Heart right ventricle (tissue), 16 donors: ENCODE measurements at regions of chr9 and their contacts with region 1.

Region 1: DNA sequence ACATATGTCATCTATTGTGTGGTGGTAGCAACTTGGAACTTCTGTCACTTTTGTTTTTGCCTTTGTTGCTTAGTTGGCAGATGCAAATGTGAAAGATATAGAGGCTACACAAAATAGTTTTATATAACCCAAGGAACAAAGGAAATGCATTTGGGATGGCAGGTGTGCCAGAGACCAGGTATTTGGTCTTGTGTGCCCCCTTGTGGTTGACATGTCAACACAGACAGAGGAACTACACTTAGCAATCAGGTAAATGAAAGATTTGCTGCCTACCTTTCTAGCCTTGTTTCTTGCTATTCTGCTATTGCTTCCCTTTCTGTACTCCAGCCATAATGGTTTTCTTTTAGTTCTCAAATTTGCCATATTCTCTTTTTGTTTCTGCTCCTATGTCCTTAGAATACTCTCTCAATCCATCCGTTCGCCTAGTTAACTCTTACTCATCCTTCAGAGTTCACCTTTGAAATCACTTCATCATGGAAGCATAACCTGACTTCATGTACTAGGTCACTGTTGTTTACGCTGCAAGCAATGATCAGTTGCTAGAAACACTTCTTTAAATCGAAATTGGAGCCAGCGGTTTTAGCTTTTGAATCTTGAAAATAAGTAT is 119.5 kb downstream of the TRPM3 start:
- DNase-seq: peak in 1 of 2 donors; percentile 10
- ATAC-seq: no peak
- H3K4me3 ChIP-seq: no peak overlapping the region
- H3K27ac ChIP-seq: no peak overlapping the region
- H3K4me1 ChIP-seq: no peaks in the 10 kb centered on the region
- H3K27me3 ChIP-seq: no peaks in the 10 kb centered on the region
- CTCF ChIP-seq: peak in 8 of 9 donors; percentile 24 to 58 (median 42)

Region 2: DNA sequence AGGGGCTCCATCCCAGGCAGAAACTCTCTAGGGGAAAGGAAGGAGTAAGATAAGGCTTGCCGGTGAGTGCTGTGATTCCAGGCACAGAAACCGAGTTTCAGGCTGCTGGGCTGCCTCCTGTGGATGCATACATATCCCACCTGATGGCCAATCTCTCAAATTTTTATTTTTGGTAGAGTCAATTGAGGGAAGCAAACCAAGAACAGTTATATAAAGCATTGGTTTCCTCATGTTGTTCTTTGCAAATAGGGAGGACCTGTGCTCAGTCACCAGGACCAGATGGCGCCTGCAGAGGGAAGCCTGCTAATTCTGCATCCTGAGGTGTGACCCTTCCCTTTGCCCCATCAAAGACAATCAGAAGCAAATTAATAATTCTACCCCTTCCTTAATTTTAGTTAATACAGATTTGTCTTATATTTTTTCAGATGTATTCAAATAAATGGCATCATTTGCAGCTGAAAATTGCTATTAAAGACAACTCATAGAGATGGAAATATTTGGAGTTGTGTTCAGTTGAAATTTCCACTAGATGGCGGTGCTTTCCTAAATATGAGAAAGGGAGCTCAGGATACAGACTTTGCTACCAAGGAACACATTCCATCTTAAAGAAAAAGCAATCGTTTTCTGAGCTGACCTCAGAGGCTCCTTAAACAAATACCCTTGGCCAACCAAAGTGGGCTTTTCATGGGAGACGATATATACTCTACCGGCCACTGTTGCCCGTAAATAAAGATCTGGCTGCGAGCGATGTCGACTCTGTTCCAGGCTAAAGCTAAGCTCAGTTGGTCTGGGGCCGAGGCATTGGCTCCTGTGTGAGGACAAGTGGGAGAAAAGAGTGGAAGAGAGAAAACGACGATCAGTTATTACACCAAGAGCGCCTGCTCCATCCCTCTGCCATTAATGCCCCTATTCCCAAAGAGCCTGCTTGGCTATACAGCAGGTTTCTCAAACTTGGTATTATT is 361.7 kb before region 1 on chr9:
- intact Hi-C with region 1: loop called in 6 of 10 experiments (anchors 1 to 10 kb)
- DNase-seq: no peak
- ATAC-seq: peak in 6 of 8 donors; percentile 55 to 75 (median 62)
- H3K4me3 ChIP-seq: no peak overlapping the region
- H3K27ac ChIP-seq: no peak overlapping the region
- H3K4me1 ChIP-seq: no peaks in the 10 kb centered on the region
- H3K27me3 ChIP-seq: no peaks in the 10 kb centered on the region
- CTCF ChIP-seq: peak; percentile 32 to 78 (median 68)

Region 3: DNA sequence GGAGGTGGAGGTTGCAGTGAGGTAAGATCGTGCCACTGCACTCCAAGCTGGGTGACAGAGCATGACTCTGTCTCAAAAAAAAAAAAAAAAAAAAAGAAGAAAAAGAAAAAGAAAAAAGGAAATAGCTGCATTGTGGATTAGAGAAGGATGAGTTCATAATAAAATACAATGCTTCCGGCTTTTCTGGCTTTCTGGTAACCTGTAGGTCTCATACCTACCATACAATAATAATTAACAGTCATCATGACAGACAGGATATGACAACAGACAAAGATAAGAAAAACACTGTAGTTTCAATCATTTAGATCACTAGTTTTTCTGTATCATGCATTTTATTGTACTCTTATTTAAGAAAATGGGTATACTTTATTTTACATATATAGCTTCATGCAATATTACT is 160.2 kb after region 1 on chr9:
- intact Hi-C with region 1: no loop called
- DNase-seq: no peak
- ATAC-seq: no peak
- H3K4me3 ChIP-seq: no peak overlapping the region
- H3K27ac ChIP-seq: no peak overlapping the region
- H3K4me1 ChIP-seq: no peaks in the 10 kb centered on the region
- H3K27me3 ChIP-seq: no peaks in the 10 kb centered on the region
- CTCF ChIP-seq: no peak